ENCODE measurements at regions of chr1 and their contacts with region 1.

Region 1: GRCh38 chr1:13748610-13749505 is 48.9 kb downstream of the PRDM2 start:
- DNase-seq: peak; percentile 90 to 98 (median 96)
- ATAC-seq: peak; percentile 89 to 92 (median 90)
- H3K4me3 ChIP-seq: peak overlapping the region; percentile 11 to 59
- H3K4me3 Mint-ChIP-seq: peak overlapping the region; percentile 82 to 94 (median 87)
- H3K27ac ChIP-seq: peak overlapping the region; percentile 87
- H3K27ac Mint-ChIP-seq: peak overlapping the region; percentile 87 to 94
- H3K4me1 ChIP-seq: peaks cover 23 to 26% of the 10 kb centered on the region in 2 experiments
- H3K4me1 Mint-ChIP-seq: peaks cover 51 to 63% (median 53%) of the 10 kb centered on the region in 3 donors
- H3K27me3 ChIP-seq: no peaks in the 10 kb centered on the region
- H3K27me3 Mint-ChIP-seq: no peaks in the 10 kb centered on the region

Region 2: DNA sequence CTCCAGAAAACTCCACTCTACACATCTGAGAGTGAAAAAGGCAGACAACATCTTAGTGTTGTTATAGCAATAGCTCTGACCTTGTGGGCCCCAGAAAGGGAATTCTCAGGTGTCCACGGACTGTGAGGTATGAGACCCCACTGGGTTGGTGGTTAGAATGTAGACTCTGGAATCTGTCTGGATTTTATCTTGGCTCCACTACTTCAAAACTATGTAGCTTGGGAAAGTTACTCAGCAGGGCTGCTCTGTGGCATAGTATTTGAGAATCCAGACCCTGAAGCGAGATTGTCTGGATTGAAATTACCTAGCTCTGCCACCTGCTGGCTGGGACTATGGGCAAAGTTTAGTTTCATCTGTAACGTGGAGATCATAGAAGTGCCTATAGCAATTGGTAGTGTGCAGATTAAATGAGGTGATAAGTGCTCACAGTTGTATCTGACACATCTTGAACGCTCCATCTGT is 23.1 kb before region 1 on chr1:
- CTCF ChIA-PET with region 1: interaction called, 8 to 17 read pairs
- POLR2A ChIA-PET with region 1: interaction called, 4 to 46 read pairs
- DNase-seq: peak; percentile 36 to 81 (median 63)
- ATAC-seq: peak; percentile 32 to 64 (median 52)
- H3K4me3 ChIP-seq: no peak overlapping the region
- H3K4me3 Mint-ChIP-seq: no peak overlapping the region
- H3K27ac ChIP-seq: no peak overlapping the region
- H3K27ac Mint-ChIP-seq: peak overlapping the region; percentile 21 to 70
- H3K4me1 ChIP-seq: peaks cover 12 to 24% of the 10 kb centered on the region in 2 experiments
- H3K4me1 Mint-ChIP-seq: peaks cover 66 to 73% (median 73%) of the 10 kb centered on the region in 3 donors
- H3K27me3 ChIP-seq: no peaks in the 10 kb centered on the region
- H3K27me3 Mint-ChIP-seq: no peaks in the 10 kb centered on the region

Region 3: DNA sequence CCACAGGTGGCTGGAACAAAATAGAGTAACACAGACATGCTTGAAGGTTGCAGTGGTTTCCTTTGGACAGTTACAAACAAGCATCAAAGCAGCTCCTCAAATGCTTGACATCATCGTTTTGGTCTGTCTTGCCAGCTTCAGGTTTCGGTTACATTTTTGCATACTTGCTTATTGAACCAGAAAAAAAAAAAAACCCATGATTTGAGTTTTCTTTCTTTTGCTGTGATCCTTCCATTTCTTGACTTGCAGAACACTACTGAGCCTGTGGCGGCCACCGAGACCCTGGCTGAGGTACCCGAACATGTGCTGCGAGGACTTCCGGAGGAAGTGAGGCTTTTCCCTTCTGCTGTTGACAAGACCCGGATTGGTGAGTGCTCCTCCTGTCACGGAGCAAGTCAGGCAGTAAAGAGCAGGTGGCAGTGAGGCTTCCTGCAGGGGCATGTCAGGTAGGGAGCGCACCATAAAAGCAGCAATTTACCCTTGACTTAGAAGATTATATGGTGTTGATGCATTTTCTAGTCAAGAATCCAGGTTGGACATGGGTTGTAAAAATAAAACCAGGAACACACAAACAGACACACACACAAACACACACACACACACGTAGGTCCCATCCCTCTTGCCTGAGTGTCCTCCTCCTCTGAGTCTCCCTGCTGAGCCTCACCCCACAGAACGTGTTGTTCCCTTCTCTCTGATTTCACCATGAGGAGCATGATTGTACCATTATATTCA is 17.9 kb before region 1 on chr1:
- CTCF ChIA-PET with region 1: interaction called, 8 to 17 read pairs
- POLR2A ChIA-PET with region 1: interaction called, 5 to 46 read pairs
- DNase-seq: peak; percentile 55 to 96 (median 89)
- ATAC-seq: peak; percentile 95 to 97 (median 96)
- H3K4me3 ChIP-seq: peak overlapping the region in 1 of 2 donors; percentile 23
- H3K4me3 Mint-ChIP-seq: peak overlapping the region; percentile 67 to 79 (median 78)
- H3K27ac ChIP-seq: peak overlapping the region; percentile 94
- H3K27ac Mint-ChIP-seq: peak overlapping the region; percentile 96 to 99
- H3K4me1 ChIP-seq: peaks cover 37 to 56% of the 10 kb centered on the region in 2 experiments
- H3K4me1 Mint-ChIP-seq: peaks cover 88 to 91% (median 90%) of the 10 kb centered on the region in 3 donors
- H3K27me3 ChIP-seq: no peaks in the 10 kb centered on the region
- H3K27me3 Mint-ChIP-seq: no peaks in the 10 kb centered on the region

Region 4: GRCh38 chr1:13761883-13762282 is 13.0 kb after region 1 on chr1:
- CTCF ChIA-PET with region 1: interaction called in 1 of 2 experiments, 6 read pairs
- POLR2A ChIA-PET with region 1: interaction called, 12 to 16 read pairs
- DNase-seq: no peak
- ATAC-seq: no peak
- H3K4me3 ChIP-seq: no peak overlapping the region
- H3K4me3 Mint-ChIP-seq: peak overlapping the region in 1 of 3 donors; percentile 40
- H3K27ac ChIP-seq: no peak overlapping the region
- H3K27ac Mint-ChIP-seq: no peak overlapping the region
- H3K4me1 ChIP-seq: peaks cover 20 to 35% of the 10 kb centered on the region in 2 experiments
- H3K4me1 Mint-ChIP-seq: peaks cover 87 to 96% (median 96%) of the 10 kb centered on the region in 3 donors
- H3K27me3 ChIP-seq: no peaks in the 10 kb centered on the region
- H3K27me3 Mint-ChIP-seq: no peaks in the 10 kb centered on the region

Measured in T-cell (primary cell).